ENCODE measurements at regions of chr1 and their contacts with region 1.

Region 1: GRCh38 chr1:11790880-11791715 is 14.7 kb downstream of the MTHFR start:
- DNase-seq: peak; percentile 81
- H3K4me3 ChIP-seq: no peak overlapping the region
- H3K27me3 ChIP-seq: no peaks in the 10 kb centered on the region
- CTCF ChIP-seq: no peak

Region 2: DNA sequence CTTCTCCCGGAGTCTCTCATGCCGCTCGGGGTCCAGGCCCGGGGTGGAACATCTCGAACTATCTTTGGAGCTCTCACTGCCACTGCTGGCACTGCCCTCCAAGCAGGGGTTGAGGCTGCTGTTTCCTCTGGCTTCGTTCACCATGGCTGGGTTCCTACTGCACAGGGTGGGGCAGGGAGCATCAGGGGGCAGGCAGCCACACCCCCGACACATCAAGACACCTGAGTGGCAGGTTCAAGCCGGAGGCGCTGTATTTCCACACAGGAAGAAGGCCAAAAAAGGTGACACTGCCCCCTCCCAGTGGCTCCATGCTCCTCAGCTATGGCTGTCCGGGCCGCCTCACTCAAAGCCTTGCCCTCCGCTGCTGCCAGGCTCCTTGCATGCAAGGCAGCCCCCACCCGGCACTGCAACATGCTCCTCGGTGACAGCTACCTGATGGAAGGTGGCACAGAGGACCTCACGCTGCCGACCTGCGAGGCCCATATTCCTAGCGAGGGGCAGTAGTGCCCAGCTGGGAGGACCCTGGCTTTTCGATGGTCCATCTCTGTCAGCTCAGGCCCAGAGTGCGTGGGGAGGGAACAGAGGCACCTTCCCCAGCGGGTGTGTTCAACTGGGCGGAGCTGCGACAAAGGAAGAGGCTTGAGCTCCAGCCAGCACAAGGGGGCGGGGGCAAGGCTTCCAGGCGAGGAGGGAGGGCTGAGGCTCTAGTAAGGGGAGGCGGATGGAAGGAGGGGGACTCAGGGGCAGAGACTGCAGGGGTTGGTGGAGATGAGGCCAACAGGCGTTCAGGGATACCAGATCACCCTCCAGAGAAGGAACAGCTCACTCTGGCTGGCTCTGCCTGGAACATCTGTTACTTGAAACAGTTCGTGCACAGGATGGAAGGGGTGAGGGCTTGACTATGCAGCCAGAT is 12.1 kb after region 1 on chr1:
- CTCF ChIA-PET with region 1: interaction called, 3 read pairs
- POLR2A ChIA-PET with region 1: interaction called, 14 read pairs
- DNase-seq: peak; percentile 91
- H3K4me3 ChIP-seq: peak overlapping the region; percentile 49
- H3K27me3 ChIP-seq: no peaks in the 10 kb centered on the region
- CTCF ChIP-seq: no peak

Region 3: GRCh38 chr1:11813021-11813420 is 21.9 kb after region 1 on chr1:
- CTCF ChIA-PET with region 1: no interaction called
- POLR2A ChIA-PET with region 1: interaction called, 13 read pairs
- DNase-seq: no peak
- H3K4me3 ChIP-seq: no peak overlapping the region
- H3K27me3 ChIP-seq: no peaks in the 10 kb centered on the region
- CTCF ChIP-seq: no peak